ENCODE measurements at regions of chr12 and their contacts with region 1.

Region 1: GRCh38 chr12:89524541-89525285 is at the start of gene GALNT4:
- DNase-seq: peak; percentile 91 to 94 (median 93)
- H3K4me3 ChIP-seq: peak within 1 kb of the TSS; percentile 79 to 96 (median 94)
- H3K27ac ChIP-seq: peak within 1 kb of the TSS; percentile 77 to 87
- H3K4me1 ChIP-seq: peaks cover 20 to 55% (median 38%) of the 10 kb centered on the region in 4 experiments
- H3K27me3 ChIP-seq: no peaks in the 10 kb centered on the region

Region 2: DNA sequence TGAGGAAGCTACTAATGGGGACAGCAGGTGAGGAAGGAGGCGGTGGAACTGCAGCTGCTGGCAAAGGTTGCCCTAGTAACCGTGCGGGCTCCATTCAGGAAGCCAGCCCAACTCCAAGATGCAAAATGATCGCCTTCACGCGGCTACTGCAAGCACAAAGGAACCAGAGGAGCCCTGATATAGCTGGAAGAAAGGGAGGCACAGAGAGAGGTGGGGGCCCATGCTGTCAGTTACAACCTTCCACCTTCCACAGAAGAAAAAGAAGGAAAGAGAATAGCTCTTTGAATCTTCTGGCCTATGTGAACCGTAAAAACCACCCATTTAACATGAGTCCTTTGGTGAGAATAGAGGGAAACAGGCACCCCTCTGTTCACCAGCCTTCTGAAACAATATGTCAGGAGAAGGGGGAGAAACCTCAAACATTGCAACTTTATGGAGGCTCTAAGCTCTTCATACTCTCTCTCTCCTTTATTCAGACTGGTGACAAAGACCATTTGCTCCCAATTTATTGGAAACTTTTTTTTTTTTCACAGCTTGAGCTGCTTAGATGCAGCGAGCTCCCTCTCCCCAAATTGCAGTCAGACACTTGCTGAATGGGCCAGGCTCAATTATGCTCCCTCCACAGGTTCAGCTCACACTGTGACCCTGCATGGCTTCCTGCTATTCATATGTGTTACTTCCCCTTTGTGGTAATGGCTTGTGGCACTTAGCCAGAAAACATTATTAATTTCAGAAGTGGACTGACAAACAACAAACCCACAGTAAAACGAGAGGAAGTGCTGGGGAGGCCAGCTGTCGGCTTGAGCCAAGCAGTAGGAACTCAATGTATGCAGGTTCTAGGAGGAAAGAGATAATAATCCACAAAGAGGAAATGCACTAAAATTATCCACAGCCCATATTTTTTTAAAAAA is 178.6 kb before region 1 on chr12:
- CTCF ChIA-PET with region 1: interaction called, 11 read pairs
- POLR2A ChIA-PET with region 1: no interaction called
- DNase-seq: peak; percentile 99
- H3K4me3 ChIP-seq: peak overlapping the region in 6 of 7 experiments; percentile 46 to 97 (median 55)
- H3K27ac ChIP-seq: peak overlapping the region in 1 of 2 experiments; percentile 70
- H3K4me1 ChIP-seq: peaks cover 49 to 80% (median 66%) of the 10 kb centered on the region in 4 experiments
- H3K27me3 ChIP-seq: no peaks in the 10 kb centered on the region

Region 3: GRCh38 chr12:89470741-89471509 is 53.8 kb before region 1 on chr12:
- CTCF ChIA-PET with region 1: interaction called, 58 read pairs
- POLR2A ChIA-PET with region 1: no interaction called
- DNase-seq: peak; percentile 59 to 80 (median 77)
- H3K4me3 ChIP-seq: no peak overlapping the region
- H3K27ac ChIP-seq: no peak overlapping the region
- H3K4me1 ChIP-seq: peaks cover 17 to 38% (median 23%) of the 10 kb centered on the region in 4 experiments
- H3K27me3 ChIP-seq: no peaks in the 10 kb centered on the region

Region 4: GRCh38 chr12:89597770-89598169 is 73.1 kb after region 1 on chr12:
- CTCF ChIA-PET with region 1: no interaction called
- POLR2A ChIA-PET with region 1: no interaction called
- DNase-seq: no peak
- H3K4me3 ChIP-seq: no peak overlapping the region
- H3K27ac ChIP-seq: no peak overlapping the region
- H3K4me1 ChIP-seq: no peaks in the 10 kb centered on the region
- H3K27me3 ChIP-seq: no peaks in the 10 kb centered on the region

Region 5: GRCh38 chr12:89663577-89664357 is 139.1 kb after region 1 on chr12:
- CTCF ChIA-PET with region 1: no interaction called
- POLR2A ChIA-PET with region 1: no interaction called
- DNase-seq: peak; percentile 36 to 87 (median 82)
- H3K4me3 ChIP-seq: peak overlapping the region in 2 of 7 experiments; percentile 8 to 60
- H3K27ac ChIP-seq: peak overlapping the region; percentile 30 to 59
- H3K4me1 ChIP-seq: peaks cover 12 to 21% (median 16%) of the 10 kb centered on the region in 4 experiments
- H3K27me3 ChIP-seq: no peaks in the 10 kb centered on the region